Psoas muscle (tissue), 8 donors: ENCODE measurements at regions of chr6 and their contacts with region 1.

Region 1: DNA sequence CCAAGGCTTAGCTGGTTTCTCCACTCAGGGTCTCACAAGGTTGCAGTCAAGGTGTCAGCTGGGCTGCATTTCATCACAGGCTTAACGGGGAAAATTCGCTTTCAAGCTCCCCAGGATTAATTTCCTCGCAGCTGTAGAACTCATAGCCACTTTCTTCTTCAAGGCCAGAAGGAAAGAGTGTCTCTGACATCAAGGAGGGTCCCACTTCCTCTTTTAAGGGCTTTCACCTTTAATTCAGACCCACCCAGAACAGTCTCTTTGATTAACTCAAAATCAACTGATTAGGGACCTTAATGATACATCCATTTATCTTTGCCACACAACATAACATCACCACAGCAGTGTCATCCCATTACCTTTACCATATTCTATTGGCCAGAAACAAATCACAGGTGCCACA is 183.3 kb upstream of the ARID1B start:
- DNase-seq: no peak
- ATAC-seq: no peak
- H3K4me3 ChIP-seq: no peak overlapping the region
- H3K27ac ChIP-seq: no peak overlapping the region
- H3K4me1 ChIP-seq: no peaks in the 10 kb centered on the region
- H3K27me3 ChIP-seq: peaks cover 0 to 2% (median 2%) of the 10 kb centered on the region in 3 donors
- CTCF ChIP-seq: no peak

Region 2: DNA sequence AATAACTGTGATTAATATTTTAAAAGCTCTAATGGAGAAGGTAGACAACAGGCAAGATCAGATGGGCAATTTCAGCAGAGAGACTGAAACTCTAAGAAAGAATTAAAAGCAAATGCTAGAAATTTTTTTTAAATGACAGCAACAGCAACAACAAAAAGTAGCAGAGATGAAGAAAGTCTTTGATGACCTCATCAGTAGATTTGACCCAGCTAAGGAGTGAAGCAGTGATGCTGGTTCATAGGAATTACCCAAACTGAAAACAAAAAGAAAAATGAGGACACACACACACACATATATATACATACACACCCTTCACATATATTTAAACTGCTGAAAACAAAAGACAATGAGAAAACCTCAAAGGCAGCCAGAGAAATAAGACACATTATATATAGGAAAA is 14.3 kb before region 1 on chr6:
- intact Hi-C with region 1: loop called in 1 of 2 experiments (anchors 1 kb)
- DNase-seq: no peak
- ATAC-seq: no peak
- H3K4me3 ChIP-seq: no peak overlapping the region
- H3K27ac ChIP-seq: no peak overlapping the region
- H3K4me1 ChIP-seq: no peaks in the 10 kb centered on the region
- H3K27me3 ChIP-seq: no peaks in the 10 kb centered on the region
- CTCF ChIP-seq: no peak